Panc1 (cell line): ENCODE measurements at regions of chr19 and their contacts with region 1.

Region 1: GRCh38 chr19:11380653-11381534 is 3.2 kb downstream of the EPOR start:
- DNase-seq: peak; percentile 88
- ATAC-seq: peak; percentile 83
- H3K4me3 ChIP-seq: peak overlapping the region; percentile 62 to 75
- H3K27ac ChIP-seq: peak overlapping the region; percentile 91
- H3K4me1 ChIP-seq: peaks cover 29% of the 10 kb centered on the region
- H3K27me3 ChIP-seq: no peaks in the 10 kb centered on the region
- CTCF ChIP-seq: peak; percentile 79

Region 2: DNA sequence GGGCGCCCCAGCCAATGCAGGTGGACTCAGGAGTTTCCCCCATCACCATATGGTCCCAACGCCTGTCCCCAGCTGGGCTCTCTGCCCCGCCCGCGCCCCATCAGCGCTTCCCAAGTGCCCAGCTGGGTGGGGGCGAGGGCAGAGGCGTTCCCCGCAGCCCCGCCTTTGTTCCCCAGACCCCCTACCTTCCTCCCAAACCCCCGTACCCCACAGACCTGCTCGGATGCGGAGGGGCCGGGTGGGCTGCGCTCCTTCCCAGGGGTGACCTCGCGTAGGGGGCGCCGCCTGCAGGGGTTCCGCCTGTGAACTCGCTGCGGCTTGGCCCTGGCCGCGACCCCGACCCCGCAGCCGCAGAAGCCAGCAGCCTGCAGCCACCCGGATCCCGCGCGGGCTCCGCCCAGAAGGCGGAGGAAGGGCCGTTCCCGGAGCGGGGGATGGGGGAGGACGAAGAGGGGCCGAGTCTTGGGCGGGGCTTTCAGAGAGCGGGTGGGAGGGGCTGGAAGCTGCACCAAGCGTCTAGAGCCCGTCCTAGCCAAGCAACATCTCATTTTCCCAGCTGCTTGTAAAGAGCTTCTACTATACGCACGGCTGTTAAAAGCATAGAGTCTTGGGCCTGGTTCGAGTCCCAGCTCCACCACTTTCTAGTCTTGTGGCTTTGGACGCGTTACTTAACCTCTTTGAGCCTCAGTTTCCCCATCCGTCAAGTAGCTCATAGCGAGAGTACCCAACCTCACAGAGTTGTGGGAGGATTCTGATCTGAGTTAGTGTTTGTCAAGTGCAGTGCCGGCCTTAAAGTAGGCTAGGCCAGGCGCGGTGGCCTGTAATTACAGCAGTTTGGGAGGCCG is 41.4 kb before region 1 on chr19 and contains the start of gene RAB3D:
- CTCF ChIA-PET with region 1: no interaction called
- POLR2A ChIA-PET with region 1: no interaction called
- in situ Hi-C with region 1: no loop called
- intact Hi-C with region 1: no loop called
- DNase-seq: peak; percentile 28
- ATAC-seq: peak; percentile 95
- H3K4me3 ChIP-seq: peak within 1 kb of the TSS; percentile 61 to 63
- H3K27ac ChIP-seq: peak within 1 kb of the TSS; percentile 66
- H3K4me1 ChIP-seq: peaks cover 13% of the 10 kb centered on the region; the same call in 1 of the 2 replicates
- H3K27me3 ChIP-seq: no peaks in the 10 kb centered on the region
- CTCF ChIP-seq: no peak
- total RNA-seq, gene RAB3D: 46.6 TPM

Region 3: GRCh38 chr19:11355160-11356073 is 25.5 kb before region 1 on chr19 and contains the start of gene PLPPR2:
- CTCF ChIA-PET with region 1: no interaction called
- POLR2A ChIA-PET with region 1: no interaction called
- in situ Hi-C with region 1: no loop called
- intact Hi-C with region 1: no loop called
- DNase-seq: no peak
- ATAC-seq: peak; percentile 94
- H3K4me3 ChIP-seq: peak within 1 kb of the TSS; percentile 55 to 73
- H3K27ac ChIP-seq: peak within 1 kb of the TSS; percentile 78
- H3K4me1 ChIP-seq: no peaks in the 10 kb centered on the region; the same call in 1 of the 2 replicates
- H3K27me3 ChIP-seq: no peaks in the 10 kb centered on the region
- CTCF ChIP-seq: no peak
- total RNA-seq, gene PLPPR2: 43.3 TPM

Region 4: DNA sequence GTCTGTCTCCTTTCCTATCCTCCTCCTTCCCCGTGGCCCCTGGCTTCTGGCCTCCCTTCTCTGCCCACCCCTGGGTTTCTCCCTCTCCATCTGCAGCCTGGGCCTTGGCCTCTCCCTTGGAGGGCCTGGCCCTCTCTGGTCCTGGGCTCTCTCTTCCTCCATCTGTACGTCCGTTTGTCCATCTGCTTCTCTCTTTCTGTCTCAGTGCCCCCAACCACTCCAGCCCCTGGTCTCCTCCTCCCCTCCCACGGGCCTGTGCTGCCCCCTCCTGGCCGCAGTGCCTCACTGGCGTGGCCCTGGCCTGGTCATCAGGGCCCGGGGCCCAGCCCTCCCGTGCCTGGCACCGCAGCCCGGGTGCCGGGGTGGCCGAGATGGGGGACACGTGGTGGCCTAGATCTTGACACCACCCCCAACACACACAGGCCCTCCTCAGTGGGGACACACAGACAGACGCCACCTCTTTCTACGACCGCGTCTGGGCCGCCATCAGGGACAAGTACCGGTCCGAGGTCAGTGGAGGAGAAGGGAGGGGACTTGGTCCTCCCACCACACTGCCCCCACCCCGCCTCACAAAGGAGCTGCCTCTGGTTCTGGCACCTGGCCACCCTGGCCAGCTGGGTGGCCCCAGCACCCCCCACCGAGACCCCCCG is 65.9 kb after region 1 on chr19:
- CTCF ChIA-PET with region 1: interaction called, 4 read pairs
- POLR2A ChIA-PET with region 1: no interaction called
- in situ Hi-C with region 1: no loop called
- intact Hi-C with region 1: loop called (anchors 2 kb)
- DNase-seq: no peak
- ATAC-seq: peak; percentile 85
- H3K4me3 ChIP-seq: no peak overlapping the region
- H3K27ac ChIP-seq: no peak overlapping the region
- H3K4me1 ChIP-seq: no peaks in the 10 kb centered on the region
- H3K27me3 ChIP-seq: no peaks in the 10 kb centered on the region
- CTCF ChIP-seq: peak; percentile 85

Region 5: GRCh38 chr19:11482384-11483050 is 101.6 kb after region 1 on chr19:
- CTCF ChIA-PET with region 1: interaction called, 10 read pairs
- POLR2A ChIA-PET with region 1: no interaction called
- in situ Hi-C with region 1: no loop called
- intact Hi-C with region 1: no loop called
- DNase-seq: no peak
- ATAC-seq: peak; percentile 81
- H3K4me3 ChIP-seq: peak overlapping the region; percentile 51 to 58
- H3K27ac ChIP-seq: 0 out of 2 replicates have a peak overlapping the region, but pooled peaks have one; percentile 51
- H3K4me1 ChIP-seq: no peaks in the 10 kb centered on the region
- H3K27me3 ChIP-seq: no peaks in the 10 kb centered on the region
- CTCF ChIP-seq: peak; percentile 96

Region 6: DNA sequence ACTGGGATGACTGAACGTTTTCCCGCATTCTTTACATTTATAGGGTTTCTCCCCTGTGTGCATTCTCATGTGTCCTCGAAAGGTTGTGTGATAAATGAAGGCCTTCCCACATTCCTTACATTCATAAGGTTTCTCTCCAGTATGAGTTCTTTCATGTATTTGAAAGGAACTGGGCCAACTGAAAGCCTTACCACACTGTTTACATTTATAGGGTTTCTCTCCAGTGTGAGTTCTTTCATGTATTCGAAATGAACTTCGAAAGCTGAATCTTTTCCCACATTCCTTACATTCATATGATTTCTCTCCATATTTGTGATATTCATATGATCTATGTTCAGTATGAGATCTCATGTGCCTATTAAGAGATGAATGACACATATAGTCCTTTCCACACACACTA is 1084.3 kb after region 1 on chr19:
- CTCF ChIA-PET with region 1: interaction called, 13 read pairs
- POLR2A ChIA-PET with region 1: no interaction called
- in situ Hi-C with region 1: no loop called
- intact Hi-C with region 1: no loop called
- DNase-seq: no peak
- ATAC-seq: no peak
- H3K4me3 ChIP-seq: no peak overlapping the region
- H3K27ac ChIP-seq: no peak overlapping the region
- H3K4me1 ChIP-seq: no peaks in the 10 kb centered on the region
- H3K27me3 ChIP-seq: no peaks in the 10 kb centered on the region
- CTCF ChIP-seq: no peak